ENCODE measurements at regions of chr15 and their contacts with region 1.

Region 1: DNA sequence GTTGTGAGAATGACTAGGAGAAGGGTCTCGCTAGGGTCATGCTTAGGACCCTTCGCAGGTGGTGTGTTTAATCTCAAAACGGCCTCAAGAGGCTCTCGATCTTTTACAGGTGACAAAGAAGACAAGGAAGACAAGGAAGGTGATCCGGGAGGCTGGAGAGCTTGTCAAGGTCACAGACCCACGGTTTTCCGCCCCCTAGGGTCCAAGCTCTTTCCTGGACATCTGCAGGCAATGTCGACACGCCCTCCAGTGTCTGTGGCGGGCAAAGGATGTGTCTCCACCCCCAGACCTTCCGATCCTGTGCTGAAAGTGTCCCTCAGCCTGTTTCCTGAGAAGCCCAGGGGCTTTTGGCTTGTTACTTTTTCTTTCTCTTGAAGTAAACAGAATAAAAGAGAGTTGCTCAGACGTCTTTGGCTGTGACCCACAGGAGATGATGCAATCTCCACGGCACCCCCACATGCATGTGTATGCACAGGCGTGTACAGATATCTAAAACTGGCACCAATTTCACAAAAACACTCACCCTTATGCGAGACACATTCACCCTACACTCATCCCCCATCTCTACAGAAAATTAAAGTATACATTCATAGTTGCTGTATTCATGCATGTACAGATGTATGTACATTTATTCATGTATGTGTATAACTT is 108.8 kb downstream of the KLF13 start:
- DNase-seq: peak; percentile 88
- H3K4me3 ChIP-seq: peak overlapping the region in 2 of 4 donors; percentile 2 to 16
- H3K27ac ChIP-seq: peak overlapping the region; percentile 75 to 79 (median 78)
- H3K4me1 ChIP-seq: peaks cover 16 to 32% (median 20%) of the 10 kb centered on the region in 4 donors
- H3K27me3 ChIP-seq: no peaks in the 10 kb centered on the region
- CTCF ChIP-seq: peak; percentile 60 to 81 (median 66)
- EP300 ChIP-seq: no peak
- POLR2A ChIP-seq: no peak

Region 2: GRCh38 chr15:31365655-31366127 is 69.7 kb before region 1 on chr15:
- in situ Hi-C with region 1: no loop called
- intact Hi-C with region 1: loop called (anchors 10 kb)
- DNase-seq: peak; percentile 96
- H3K4me3 ChIP-seq: peak overlapping the region in 1 of 4 donors; percentile 24
- H3K27ac ChIP-seq: peak overlapping the region; percentile 85 to 96 (median 91)
- H3K4me1 ChIP-seq: peaks cover 53 to 88% (median 59%) of the 10 kb centered on the region in 4 donors
- H3K27me3 ChIP-seq: no peaks in the 10 kb centered on the region
- CTCF ChIP-seq: peak; percentile 27 to 59 (median 36)
- EP300 ChIP-seq: peak; percentile 100
- POLR2A ChIP-seq: peak; percentile 64

Measured in transverse colon (tissue), 4 donors.